K562 (cell line): ENCODE measurements at regions of chr19 and their contacts with region 1.

Region 1: DNA sequence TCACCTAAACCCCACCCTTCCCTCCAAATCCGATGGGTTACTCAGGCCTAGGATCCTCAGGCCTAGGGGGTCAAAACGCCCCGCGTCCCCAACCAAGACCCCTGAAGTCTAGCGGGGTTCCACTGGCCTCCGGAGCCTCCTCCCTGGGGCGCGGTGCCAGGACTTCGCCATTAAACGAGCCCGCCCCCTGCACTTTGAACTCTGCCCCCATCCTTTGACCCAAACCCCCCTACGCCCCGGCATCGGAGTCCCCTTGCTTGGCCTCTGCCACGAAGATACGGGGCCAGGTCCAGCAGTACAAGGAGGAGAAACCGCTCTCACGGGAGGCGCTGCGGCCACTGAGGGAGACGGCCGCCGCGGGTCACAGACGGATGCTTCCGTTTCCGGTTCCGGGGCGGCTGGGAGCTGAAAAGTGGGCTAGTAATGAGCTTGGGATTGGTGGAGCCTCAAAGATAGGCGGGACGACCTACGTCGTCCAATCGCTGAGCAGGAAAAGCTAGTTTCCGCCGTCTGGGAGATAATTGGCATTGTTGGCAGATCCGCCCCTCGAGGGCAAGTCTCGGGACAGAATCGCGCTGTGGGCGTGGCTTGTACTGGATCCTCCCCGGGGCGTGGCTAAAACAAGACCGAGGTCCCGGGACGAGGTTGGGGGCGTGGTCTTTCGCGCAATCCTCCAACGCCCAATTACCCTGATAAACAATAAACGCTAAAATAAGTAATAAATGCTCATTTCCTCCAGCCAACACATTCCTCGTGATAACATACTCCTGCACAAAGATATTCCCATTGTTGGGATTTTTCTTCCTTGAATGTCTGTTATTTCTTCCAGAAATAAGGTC is 5.7 kb upstream of the ZNF77 start:
- DNase-seq: peak; percentile 98 to 99 (median 99)
- ATAC-seq: peak; percentile 95
- H3K4me3 ChIP-seq: peak overlapping the region; percentile 77
- H3K27ac ChIP-seq: peak overlapping the region; percentile 94
- H3K4me1 ChIP-seq: peaks cover 8 to 9% of the 10 kb centered on the region in 2 experiments
- H3K27me3 ChIP-seq: no peaks in the 10 kb centered on the region
- CTCF ChIP-seq: peak in 1 of 3 experiments; percentile 2; a peak in 1 of 6 replicates
- EP300 ChIP-seq: no peak
- POLR2A ChIP-seq: peak; percentile 99
- RAD21 ChIP-seq: 0 out of 4 replicates have a peak, but pooled peaks of 1 of the 2 experiments have one; percentile 4

Region 2: DNA sequence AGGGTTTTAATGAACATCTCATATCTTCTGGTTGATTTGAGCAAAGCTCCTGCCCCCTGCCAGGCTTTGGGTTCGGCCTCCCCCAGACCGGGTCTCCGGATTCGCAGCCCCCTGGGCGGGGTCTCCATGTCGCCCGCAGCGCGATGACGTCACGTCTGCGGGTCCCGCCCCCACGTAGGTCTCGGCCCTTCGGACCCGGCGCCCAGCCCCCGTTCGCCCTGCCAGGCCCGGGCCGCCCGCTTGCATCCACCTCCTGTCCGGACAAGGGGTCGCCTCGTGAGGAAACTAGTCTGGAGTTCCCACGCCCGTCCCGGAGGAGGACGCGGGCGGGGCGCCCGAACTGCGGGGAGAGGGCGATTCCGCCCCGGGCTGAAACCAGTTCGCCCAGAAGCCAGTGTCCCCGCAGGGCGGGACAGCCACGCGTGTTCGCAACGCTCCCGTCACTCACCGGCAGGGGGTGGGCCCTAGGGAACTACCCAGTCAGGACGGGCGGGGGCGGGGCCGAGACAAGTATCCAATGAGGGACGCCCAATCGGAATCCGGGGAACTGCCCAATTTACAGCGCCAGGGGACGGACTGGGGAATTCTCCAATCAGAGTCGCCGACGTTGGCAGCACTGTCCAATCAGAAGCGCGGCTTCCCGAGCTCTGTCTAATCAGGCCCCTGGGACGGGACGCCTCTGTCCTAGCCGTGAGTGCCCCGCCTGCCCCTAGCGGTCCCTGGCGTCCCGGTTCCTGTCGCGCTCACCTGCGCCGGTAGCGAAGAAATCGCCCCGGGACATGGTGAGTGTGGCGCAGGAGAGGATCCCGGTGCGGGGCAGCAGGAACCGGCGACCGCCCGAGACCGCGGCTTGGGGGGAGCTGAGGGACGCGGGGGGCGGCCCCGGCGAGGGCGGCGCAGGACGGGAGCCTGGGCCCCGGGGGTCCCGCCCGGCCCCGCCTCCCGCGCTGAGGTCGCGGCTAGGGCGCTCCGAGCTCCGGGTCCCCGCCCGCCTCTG is 109.4 kb before region 1 on chr19 and contains the start of gene ZNF555:
- CTCF ChIA-PET with region 1: no interaction called
- POLR2A ChIA-PET with region 1: interaction called, 6 read pairs
- in situ Hi-C with region 1: no loop called
- intact Hi-C with region 1: loop called (anchors 1 kb)
- DNase-seq: peak; percentile 99 to 100 (median 99)
- ATAC-seq: peak; percentile 100
- H3K4me3 ChIP-seq: peak within 1 kb of the TSS; percentile 83
- H3K27ac ChIP-seq: peak within 1 kb of the TSS; percentile 96
- H3K4me1 ChIP-seq: peaks cover 6 to 24% of the 10 kb centered on the region in 2 experiments; a peak in 4 of 5 replicates
- H3K27me3 ChIP-seq: no peaks in the 10 kb centered on the region
- CTCF ChIP-seq: peak; percentile 47 to 58 (median 57)
- EP300 ChIP-seq: no peak
- POLR2A ChIP-seq: peak; percentile 67; the same call in 1 of the 2 replicates
- RAD21 ChIP-seq: no peak
- polyA plus RNA-seq, gene ZNF555: 4.4 to 6.1 TPM

Region 3: DNA sequence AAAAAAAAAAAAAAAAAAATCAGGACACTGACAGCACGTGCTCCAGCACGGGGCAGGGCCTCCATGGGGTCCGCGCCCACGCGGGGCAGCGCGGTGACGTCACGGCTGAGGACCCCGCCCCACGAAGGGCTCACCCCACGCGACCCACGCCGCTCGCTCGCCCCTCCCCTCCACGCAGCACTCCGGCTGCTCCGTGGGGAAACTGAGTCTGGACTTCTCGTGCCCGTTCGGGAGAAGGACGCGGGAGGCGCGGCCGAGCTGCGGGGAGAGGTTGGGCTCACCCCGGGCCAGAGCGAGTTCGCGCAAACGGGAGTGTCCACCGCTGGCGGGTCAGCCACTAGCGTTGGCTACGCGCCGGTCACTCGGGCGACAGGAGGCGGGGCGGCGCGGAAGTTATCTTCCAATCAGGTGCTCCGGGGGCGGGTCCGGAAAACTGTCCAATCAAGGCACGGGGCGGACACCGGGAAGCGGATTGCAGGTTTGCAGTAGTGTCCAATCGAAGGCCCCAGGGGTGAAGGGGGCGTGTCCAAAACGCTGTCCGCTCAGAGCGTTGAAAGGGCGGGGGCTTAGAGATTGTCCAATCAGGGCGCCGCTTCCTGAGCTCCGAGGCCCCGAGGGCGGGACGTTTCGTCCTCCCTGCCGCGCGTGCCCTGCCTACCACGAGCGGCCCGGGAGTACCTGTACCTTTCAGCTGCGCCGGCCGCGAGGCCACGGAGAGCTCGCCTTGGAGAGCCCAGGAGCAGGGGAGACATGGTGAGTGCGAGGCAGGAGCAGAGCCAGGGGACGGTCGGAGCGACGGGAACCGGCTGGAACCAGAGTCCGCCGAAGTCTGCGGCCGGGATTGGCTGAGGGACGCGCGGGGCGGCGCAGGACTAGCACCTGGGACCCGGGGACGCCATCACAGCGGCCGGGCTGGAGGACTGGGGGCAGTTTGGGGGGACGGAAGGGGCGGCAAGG is 49.9 kb before region 1 on chr19 and contains the start of gene ZNF57:
- CTCF ChIA-PET with region 1: no interaction called
- POLR2A ChIA-PET with region 1: interaction called, 3 read pairs
- in situ Hi-C with region 1: no loop called
- intact Hi-C with region 1: loop called (anchors 2 kb)
- DNase-seq: peak; percentile 99
- ATAC-seq: peak; percentile 98
- H3K4me3 ChIP-seq: peak within 1 kb of the TSS; percentile 60
- H3K27ac ChIP-seq: peak within 1 kb of the TSS; percentile 71
- H3K4me1 ChIP-seq: peaks cover 6 to 23% of the 10 kb centered on the region in 2 experiments; a peak in 4 of 5 replicates
- H3K27me3 ChIP-seq: no peaks in the 10 kb centered on the region
- CTCF ChIP-seq: no peak
- EP300 ChIP-seq: no peak
- POLR2A ChIP-seq: peak; percentile 70
- RAD21 ChIP-seq: no peak
- polyA plus RNA-seq, gene ZNF57: 3.9 to 6.2 TPM

Region 4: DNA sequence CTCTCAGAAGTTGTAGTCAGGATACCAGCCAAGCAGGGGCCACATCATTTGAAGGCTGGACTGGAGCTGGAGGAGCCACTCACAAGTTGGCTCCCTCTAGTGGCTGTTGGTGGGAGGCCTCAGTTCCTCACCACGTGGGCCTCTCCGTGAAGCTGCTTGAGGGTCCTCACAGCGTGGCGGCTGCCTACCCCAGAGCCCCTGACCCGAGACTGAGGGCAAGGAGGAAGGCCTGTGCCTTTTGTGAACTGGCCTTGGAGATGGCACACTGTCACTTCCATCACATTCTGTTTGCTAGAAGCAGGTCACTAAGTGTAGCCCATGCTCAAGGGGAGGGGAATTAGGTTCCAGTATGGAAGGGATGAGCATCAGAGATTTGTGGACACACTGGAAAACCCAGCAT is 158.3 kb after region 1 on chr19:
- CTCF ChIA-PET with region 1: interaction called, 4 read pairs
- POLR2A ChIA-PET with region 1: interaction called, 6 read pairs
- in situ Hi-C with region 1: no loop called
- intact Hi-C with region 1: loop called (anchors 10 kb)
- DNase-seq: peak; percentile 64 to 84 (median 72)
- ATAC-seq: peak; percentile 93
- H3K4me3 ChIP-seq: no peak overlapping the region
- H3K27ac ChIP-seq: peak overlapping the region; percentile 29; the same call in 1 of the 3 replicates
- H3K4me1 ChIP-seq: peaks cover 2 to 78% of the 10 kb centered on the region in 2 experiments; a peak in 3 of 5 replicates
- H3K27me3 ChIP-seq: no peaks in the 10 kb centered on the region
- CTCF ChIP-seq: peak; percentile 78 to 97 (median 81)
- EP300 ChIP-seq: no peak
- POLR2A ChIP-seq: no peak
- RAD21 ChIP-seq: peak; percentile 38 to 67; a peak in 3 of 4 replicates

Region 5: GRCh38 chr19:3163230-3163886 is 212.9 kb after region 1 on chr19:
- CTCF ChIA-PET with region 1: interaction called, 10 read pairs
- POLR2A ChIA-PET with region 1: no interaction called
- in situ Hi-C with region 1: loop called (anchors 5 kb)
- intact Hi-C with region 1: loop called (anchors 2 kb)
- DNase-seq: peak; percentile 85 to 91 (median 90)
- ATAC-seq: peak; percentile 99
- H3K4me3 ChIP-seq: no peak overlapping the region
- H3K27ac ChIP-seq: no peak overlapping the region
- H3K4me1 ChIP-seq: peaks cover 4 to 13% of the 10 kb centered on the region in 2 experiments; a peak in 3 of 5 replicates
- H3K27me3 ChIP-seq: no peaks in the 10 kb centered on the region
- CTCF ChIP-seq: peak; percentile 94 to 95 (median 95)
- EP300 ChIP-seq: no peak
- POLR2A ChIP-seq: no peak
- RAD21 ChIP-seq: peak; percentile 90 to 95